HEK293 (cell line): ENCODE measurements at regions of chr6 and their contacts with region 1.

Region 1: GRCh38 chr6:2988426-2989331 is 11.0 kb upstream of the NQO2 start:
- H3K4me3 ChIP-seq: peak overlapping the region; percentile 62
- H3K27ac ChIP-seq: peak overlapping the region; percentile 90
- H3K4me1 ChIP-seq: peaks cover 26% of the 10 kb centered on the region
- CTCF ChIP-seq: peak; percentile 77; the same call in 1 of the 2 replicates

Region 2: DNA sequence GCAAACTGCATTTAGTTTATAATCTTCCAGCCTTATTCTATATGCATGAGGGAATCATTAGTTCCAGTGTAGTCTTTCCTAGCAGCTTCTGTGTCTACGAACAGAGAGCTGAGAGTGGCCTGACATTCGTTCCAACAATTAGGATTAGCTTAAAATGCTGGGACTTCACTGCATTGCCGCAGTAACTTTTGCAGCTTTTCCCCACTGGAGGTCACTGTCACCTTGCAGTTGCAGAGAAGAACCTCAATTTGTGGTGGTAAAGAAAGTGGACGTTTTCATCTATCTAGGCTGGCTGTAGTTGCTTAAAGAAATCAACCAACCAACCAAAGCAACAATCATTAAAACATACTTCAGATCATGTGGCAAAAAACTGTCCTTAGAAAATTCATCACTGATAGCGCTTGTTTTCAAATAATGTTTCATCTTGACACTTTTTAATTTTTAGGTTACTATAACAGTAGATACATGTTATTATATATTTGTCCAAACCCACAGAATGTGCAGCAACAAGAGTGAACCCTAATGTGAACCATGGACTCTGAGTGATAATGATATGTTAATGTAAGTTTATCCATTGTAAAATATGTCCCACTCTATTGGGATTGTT is 250.2 kb before region 1 on chr6:
- CTCF ChIA-PET with region 1: interaction called, 26 read pairs
- POLR2A ChIA-PET with region 1: no interaction called
- H3K4me3 ChIP-seq: no peak overlapping the region
- H3K27ac ChIP-seq: no peak overlapping the region
- H3K4me1 ChIP-seq: no peaks in the 10 kb centered on the region
- CTCF ChIP-seq: peak; percentile 82

Region 3: GRCh38 chr6:2841264-2842138 is 147.2 kb before region 1 on chr6 and contains the start of gene SERPINB1:
- CTCF ChIA-PET with region 1: interaction called, 72 read pairs
- POLR2A ChIA-PET with region 1: interaction called, 39 read pairs
- H3K4me3 ChIP-seq: peak within 1 kb of the TSS; percentile 49
- H3K27ac ChIP-seq: peak within 1 kb of the TSS; percentile 54; the same call in 1 of the 2 replicates
- H3K4me1 ChIP-seq: peaks cover 25% of the 10 kb centered on the region
- CTCF ChIP-seq: peak; percentile 64

Region 4: GRCh38 chr6:2931970-2932748 is 56.5 kb before region 1 on chr6:
- CTCF ChIA-PET with region 1: interaction called, 20 read pairs
- POLR2A ChIA-PET with region 1: interaction called, 6 read pairs
- H3K4me3 ChIP-seq: no peak overlapping the region
- H3K27ac ChIP-seq: no peak overlapping the region
- H3K4me1 ChIP-seq: no peaks in the 10 kb centered on the region
- CTCF ChIP-seq: peak; percentile 92

Region 5: GRCh38 chr6:2966347-2966746 is 22.3 kb before region 1 on chr6:
- CTCF ChIA-PET with region 1: interaction called, 11 read pairs
- POLR2A ChIA-PET with region 1: interaction called, 25 read pairs
- H3K4me3 ChIP-seq: no peak overlapping the region
- H3K27ac ChIP-seq: no peak overlapping the region
- H3K4me1 ChIP-seq: peaks cover 6% of the 10 kb centered on the region
- CTCF ChIP-seq: no peak

Region 6: DNA sequence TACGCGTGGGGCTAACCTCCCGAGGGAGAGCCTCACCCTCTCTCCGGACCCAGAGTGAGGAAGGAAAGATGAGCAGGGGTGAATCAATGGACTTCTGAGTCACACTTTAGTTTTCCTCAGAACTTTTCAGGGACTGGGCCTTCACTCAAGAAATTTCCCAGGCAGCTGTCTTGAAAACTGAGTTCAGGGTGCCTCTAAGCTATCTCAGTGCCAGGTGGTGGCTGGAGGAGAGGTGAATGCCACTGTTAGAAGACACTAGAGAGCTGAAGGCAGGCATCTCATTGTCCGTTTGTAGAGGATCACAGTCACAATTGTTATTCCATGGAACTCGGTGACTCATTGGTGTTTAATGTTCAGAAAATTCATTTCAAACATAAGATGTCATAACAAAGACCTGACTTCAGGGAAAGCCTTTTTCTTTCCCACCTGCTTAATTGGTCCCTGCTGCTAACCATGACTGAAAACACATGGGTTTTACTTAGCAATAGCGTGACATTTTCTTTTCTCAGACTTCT is 12.1 kb before region 1 on chr6:
- CTCF ChIA-PET with region 1: interaction called, 22 read pairs
- POLR2A ChIA-PET with region 1: interaction called, 25 read pairs
- H3K4me3 ChIP-seq: no peak overlapping the region
- H3K27ac ChIP-seq: no peak overlapping the region
- H3K4me1 ChIP-seq: no peaks in the 10 kb centered on the region; the same call in 1 of the 2 replicates
- CTCF ChIP-seq: no peak

Region 7: DNA sequence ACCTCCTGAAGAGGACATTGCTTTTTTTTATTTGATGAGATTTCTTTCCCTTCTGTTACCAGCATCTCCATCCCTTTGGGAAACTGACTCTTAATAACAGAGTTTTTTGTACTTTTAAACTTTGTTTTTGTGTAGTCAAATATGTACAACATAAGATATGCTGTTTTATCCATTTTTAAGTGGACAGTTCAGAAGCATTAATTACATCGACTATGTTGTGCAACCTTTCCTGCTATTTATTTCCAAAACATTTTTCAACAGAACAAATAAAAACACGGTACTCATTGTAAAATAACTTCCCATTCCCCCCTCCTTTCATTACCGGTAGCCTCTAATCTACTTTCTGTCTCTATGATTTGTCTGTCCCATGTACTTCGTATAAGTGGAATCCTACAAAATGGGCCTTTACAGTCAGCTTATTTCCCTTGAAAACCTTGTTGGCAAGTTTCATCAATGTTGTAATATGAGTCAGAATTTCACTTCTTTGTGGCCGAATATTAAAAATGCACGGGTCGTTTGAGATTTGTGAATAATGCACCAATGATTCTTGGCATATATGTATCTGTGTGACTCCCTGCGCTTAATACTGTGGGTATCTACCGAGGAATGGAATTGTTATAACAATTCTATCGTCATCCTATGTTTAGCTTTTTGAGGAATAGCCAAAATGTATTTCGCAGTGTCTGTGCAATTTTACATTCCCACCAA is 68.5 kb after region 1 on chr6:
- CTCF ChIA-PET with region 1: interaction called, 11 read pairs
- POLR2A ChIA-PET with region 1: no interaction called
- H3K4me3 ChIP-seq: no peak overlapping the region
- H3K27ac ChIP-seq: no peak overlapping the region
- H3K4me1 ChIP-seq: no peaks in the 10 kb centered on the region
- CTCF ChIP-seq: no peak